SK-N-SH (cell line): ENCODE measurements at regions of chr15 and their contacts with region 1.

Region 1: DNA sequence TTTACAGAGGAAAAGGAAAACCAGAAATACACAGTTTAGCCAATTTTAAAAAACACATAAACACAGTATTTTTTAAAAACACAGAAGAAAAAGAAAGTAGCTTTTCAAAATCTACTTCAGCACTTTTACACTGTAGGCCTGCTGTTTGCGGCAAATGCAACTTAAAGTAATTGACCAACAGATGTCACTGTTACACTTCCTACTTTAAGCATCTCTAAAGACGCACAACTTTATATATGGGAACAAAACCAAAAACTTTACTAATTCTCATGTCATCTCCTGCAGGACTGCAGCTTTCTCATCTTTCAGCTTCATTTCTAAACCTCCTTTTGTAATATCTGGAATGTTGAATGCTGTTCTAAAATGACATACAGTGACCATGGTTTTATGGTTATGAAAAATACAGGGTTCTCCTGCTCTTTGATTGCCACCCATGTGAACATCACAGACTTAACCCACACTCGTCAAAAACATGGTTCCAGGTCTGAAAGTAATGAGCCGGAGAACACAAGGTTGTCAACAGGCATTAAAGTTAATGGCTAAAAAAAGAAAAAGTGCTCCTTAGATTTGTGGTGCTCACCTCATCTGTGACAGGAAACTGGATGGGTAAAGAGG is 107.9 kb downstream of the FMN1 start:
- DNase-seq: peak; percentile 30
- H3K4me3 ChIP-seq: no peak overlapping the region
- H3K27ac ChIP-seq: peak overlapping the region; percentile 48 to 85; a peak in 3 of 4 replicates
- H3K4me1 ChIP-seq: peaks cover 3 to 31% of the 10 kb centered on the region in 2 experiments
- H3K27me3 ChIP-seq: no peaks in the 10 kb centered on the region
- CTCF ChIP-seq: peak; percentile 80
- EP300 ChIP-seq: peak in 1 of 2 experiments; percentile 49; a peak in 2 of 4 replicates
- RAD21 ChIP-seq: peak; percentile 87

Region 2: DNA sequence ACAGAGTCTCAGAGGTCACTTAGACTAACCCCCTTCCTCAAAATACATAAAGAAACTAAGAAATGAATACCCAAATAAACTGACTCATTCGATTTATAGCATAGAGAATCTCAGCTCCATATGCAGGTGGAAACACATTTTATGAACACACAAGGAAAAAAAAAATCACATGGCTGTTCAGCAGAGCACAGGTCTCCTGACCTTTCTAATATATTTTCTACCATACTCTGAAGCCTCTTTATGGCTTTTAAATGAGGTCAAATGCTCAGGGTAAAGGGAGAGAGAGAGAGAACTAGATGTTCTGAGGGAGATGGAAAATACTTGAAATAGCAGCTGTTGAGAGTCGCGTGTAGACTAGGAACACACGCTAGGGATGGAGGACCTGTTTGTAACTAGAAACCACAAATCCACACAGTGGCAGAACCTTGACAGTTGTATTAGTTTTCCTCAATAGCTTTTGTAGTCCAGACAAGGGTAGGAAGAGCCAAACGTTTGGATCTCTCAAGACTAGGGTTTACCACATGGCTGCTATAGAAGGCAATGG is 57.4 kb before region 1 on chr15:
- CTCF ChIA-PET with region 1: interaction called, 18 read pairs
- POLR2A ChIA-PET with region 1: no interaction called
- DNase-seq: no peak
- H3K4me3 ChIP-seq: no peak overlapping the region
- H3K27ac ChIP-seq: peak overlapping the region; percentile 9 to 47; a peak in 3 of 4 replicates
- H3K4me1 ChIP-seq: peaks cover 10 to 28% of the 10 kb centered on the region in 2 experiments; a peak in 3 of 4 replicates
- H3K27me3 ChIP-seq: no peaks in the 10 kb centered on the region
- CTCF ChIP-seq: no peak
- EP300 ChIP-seq: no peak
- RAD21 ChIP-seq: no peak

Region 3: GRCh38 chr15:33074942-33075341 is 11.7 kb before region 1 on chr15:
- CTCF ChIA-PET with region 1: interaction called, 26 read pairs
- POLR2A ChIA-PET with region 1: no interaction called
- DNase-seq: no peak
- H3K4me3 ChIP-seq: no peak overlapping the region
- H3K27ac ChIP-seq: no peak overlapping the region
- H3K4me1 ChIP-seq: no peaks in the 10 kb centered on the region
- H3K27me3 ChIP-seq: no peaks in the 10 kb centered on the region
- CTCF ChIP-seq: no peak
- EP300 ChIP-seq: no peak
- RAD21 ChIP-seq: peak; percentile 39

Region 4: DNA sequence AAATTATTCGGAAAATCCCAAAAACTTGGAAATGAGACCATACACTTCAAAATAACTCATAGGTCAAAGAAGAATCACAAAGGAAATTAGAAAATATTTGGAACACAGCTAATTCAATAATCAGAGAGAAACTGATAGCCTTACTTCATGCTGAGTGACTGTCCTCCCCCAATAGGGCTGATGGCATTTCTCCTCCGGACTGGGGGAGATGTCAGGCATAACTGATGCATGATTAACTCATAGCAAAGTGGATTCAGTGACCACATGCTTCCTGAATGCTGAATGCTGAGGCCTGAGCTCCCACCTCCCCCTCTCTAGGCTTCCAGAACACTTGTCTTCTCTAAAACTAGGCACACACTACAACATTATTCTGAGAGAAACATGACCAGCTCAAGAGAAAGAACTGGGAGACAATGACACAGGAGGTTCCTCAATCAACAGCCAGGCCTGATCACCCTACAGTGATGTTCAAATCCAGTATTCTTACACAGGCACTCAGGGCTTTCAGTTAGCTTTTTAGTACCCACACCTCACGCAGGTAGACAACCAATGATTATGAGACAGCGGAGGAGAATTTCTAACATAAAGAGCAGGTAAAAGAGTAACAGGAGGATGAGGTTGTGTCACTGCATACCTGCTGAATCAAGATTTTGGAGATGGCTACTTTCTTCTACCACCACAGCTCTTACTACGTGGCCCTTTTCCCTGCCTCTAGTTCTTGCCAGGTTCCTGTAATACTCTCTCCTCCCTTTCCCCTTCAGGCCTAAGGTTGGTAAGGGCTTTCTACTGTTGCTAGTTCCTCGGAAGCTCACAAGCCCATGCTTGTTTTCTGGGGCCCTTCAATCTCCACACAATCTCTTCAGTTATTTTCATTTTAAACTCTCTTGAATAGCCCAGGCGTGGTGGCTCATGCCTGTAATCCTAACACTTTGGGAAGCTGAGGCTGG is 11.8 kb after region 1 on chr15:
- CTCF ChIA-PET with region 1: interaction called, 26 read pairs
- POLR2A ChIA-PET with region 1: no interaction called
- DNase-seq: no peak
- H3K4me3 ChIP-seq: peak overlapping the region in 1 of 2 experiments; percentile 7; a peak in 1 of 4 replicates
- H3K27ac ChIP-seq: peak overlapping the region; percentile 79 to 99
- H3K4me1 ChIP-seq: peaks cover 0 to 71% of the 10 kb centered on the region in 2 experiments; a peak in 3 of 4 replicates
- H3K27me3 ChIP-seq: no peaks in the 10 kb centered on the region
- CTCF ChIP-seq: no peak
- EP300 ChIP-seq: peak; percentile 79 to 99
- RAD21 ChIP-seq: no peak

Region 5: DNA sequence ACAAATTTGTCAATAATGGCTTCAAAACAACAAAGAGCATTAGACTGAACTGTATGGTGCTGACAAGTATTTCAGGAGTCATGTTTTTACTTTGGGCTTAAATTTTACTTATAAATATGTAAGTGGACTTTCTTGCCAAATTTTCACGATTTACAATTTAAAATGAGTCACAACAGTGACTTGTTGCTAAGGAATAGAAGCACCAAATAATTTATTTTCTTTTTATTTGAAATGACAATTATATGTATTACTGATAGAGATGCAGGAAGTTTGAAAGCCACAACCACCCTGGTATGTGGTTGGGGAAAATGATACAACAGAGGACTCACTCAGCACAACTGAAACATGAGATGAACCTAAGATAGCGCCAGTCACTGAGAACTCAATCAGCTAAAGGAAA is 17.6 kb after region 1 on chr15:
- CTCF ChIA-PET with region 1: interaction called, 26 read pairs
- POLR2A ChIA-PET with region 1: no interaction called
- DNase-seq: no peak
- H3K4me3 ChIP-seq: peak overlapping the region in 1 of 2 experiments; percentile 27; a peak in 1 of 4 replicates
- H3K27ac ChIP-seq: peak overlapping the region; percentile 85 to 99; a peak in 3 of 4 replicates
- H3K4me1 ChIP-seq: peaks cover 2 to 71% of the 10 kb centered on the region in 2 experiments
- H3K27me3 ChIP-seq: no peaks in the 10 kb centered on the region
- CTCF ChIP-seq: no peak
- EP300 ChIP-seq: peak; percentile 74 to 100
- RAD21 ChIP-seq: no peak

Region 6: GRCh38 chr15:33132722-33133345 is 46.2 kb after region 1 on chr15:
- CTCF ChIA-PET with region 1: interaction called, 42 read pairs
- POLR2A ChIA-PET with region 1: no interaction called
- DNase-seq: peak; percentile 50
- H3K4me3 ChIP-seq: no peak overlapping the region
- H3K27ac ChIP-seq: peak overlapping the region; percentile 76 to 85; a peak in 3 of 4 replicates
- H3K4me1 ChIP-seq: peaks cover 18 to 35% of the 10 kb centered on the region in 2 experiments
- H3K27me3 ChIP-seq: no peaks in the 10 kb centered on the region
- CTCF ChIP-seq: peak; percentile 85
- EP300 ChIP-seq: no peak
- RAD21 ChIP-seq: peak; percentile 92

Region 7: GRCh38 chr15:33226559-33227181 is 140.1 kb after region 1 on chr15:
- CTCF ChIA-PET with region 1: interaction called, 11 read pairs
- POLR2A ChIA-PET with region 1: no interaction called
- DNase-seq: peak; percentile 32
- H3K4me3 ChIP-seq: no peak overlapping the region
- H3K27ac ChIP-seq: no peak overlapping the region
- H3K4me1 ChIP-seq: no peaks in the 10 kb centered on the region
- H3K27me3 ChIP-seq: no peaks in the 10 kb centered on the region
- CTCF ChIP-seq: peak; percentile 59
- EP300 ChIP-seq: no peak
- RAD21 ChIP-seq: peak; percentile 33; the same call in 1 of the 2 replicates